ENCODE measurements at regions of chr1 and their contacts with region 1.

Region 1: DNA sequence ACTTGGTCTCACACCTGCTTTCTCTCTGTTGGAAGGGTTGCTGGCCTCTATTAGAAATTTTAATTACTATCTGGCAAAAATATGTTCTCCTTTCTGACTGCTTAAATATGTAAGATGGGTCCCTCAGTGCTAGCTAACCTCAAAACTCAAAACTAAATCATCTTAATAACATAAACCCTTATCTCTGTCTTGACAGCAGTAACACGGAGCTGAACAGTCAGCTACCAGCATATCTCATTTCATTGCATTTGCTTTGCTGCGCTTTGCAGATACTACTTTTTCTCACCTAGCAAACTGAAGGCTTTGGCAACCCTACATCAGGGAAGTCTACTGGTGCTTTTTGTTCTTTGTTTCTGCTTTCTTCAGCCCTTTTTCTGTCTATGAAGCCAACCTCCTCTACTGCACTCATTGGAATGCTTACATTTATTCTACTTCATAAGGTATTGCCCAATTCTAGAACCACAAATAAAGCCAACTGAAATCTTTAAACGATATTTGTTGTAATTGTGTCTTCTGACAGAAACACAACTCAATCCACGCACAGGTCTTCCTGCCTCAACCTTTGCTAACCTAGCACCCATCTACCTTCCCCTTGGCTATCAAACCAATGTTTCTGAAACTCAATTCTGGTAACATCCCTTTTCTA is 95.6 kb downstream of the RERE start:
- DNase-seq: no peak
- H3K4me3 Mint-ChIP-seq: no peak overlapping the region
- H3K27ac Mint-ChIP-seq: no peak overlapping the region
- H3K4me1 Mint-ChIP-seq: peaks cover 47% of the 10 kb centered on the region
- H3K27me3 Mint-ChIP-seq: no peaks in the 10 kb centered on the region

Region 2: GRCh38 chr1:8259498-8260290 is 462.1 kb before region 1 on chr1:
- intact Hi-C with region 1: no loop called
- DNase-seq: no peak
- H3K4me3 Mint-ChIP-seq: no peak overlapping the region
- H3K27ac Mint-ChIP-seq: no peak overlapping the region
- H3K4me1 Mint-ChIP-seq: no peaks in the 10 kb centered on the region
- H3K27me3 Mint-ChIP-seq: peaks cover 9% of the 10 kb centered on the region

Region 3: DNA sequence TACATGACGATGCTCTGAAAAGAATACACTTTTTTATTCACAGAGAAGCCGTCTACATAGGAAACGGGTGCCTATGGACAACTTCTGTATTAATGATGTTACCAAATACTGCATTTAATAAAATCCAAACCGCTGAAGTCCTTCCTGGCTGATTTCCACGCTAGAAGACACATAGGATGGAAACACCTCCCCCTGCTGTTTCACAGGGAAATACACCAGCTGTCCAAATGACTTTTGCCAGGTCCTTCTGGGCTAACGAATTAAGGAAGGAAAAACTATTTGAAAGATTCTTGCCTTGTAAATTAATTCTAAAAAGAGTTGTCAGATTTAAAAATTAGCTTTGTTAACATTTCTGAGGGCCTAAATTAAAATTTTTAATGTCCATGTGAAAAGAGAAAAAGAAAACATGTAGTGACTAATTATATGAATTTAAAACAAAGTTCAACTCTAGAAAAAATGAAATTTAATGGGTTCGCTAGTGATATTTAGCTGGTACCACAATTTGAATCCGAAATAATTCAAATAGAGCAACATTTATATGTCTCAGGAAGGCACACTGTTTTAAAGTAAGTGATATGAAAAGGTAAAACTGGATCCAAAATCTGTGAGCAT is 50.4 kb before region 1 on chr1:
- intact Hi-C with region 1: loop called (anchors 5 kb)
- DNase-seq: no peak
- H3K4me3 Mint-ChIP-seq: no peak overlapping the region
- H3K27ac Mint-ChIP-seq: peak overlapping the region; percentile 19
- H3K4me1 Mint-ChIP-seq: peaks cover 71% of the 10 kb centered on the region
- H3K27me3 Mint-ChIP-seq: no peaks in the 10 kb centered on the region

Region 4: DNA sequence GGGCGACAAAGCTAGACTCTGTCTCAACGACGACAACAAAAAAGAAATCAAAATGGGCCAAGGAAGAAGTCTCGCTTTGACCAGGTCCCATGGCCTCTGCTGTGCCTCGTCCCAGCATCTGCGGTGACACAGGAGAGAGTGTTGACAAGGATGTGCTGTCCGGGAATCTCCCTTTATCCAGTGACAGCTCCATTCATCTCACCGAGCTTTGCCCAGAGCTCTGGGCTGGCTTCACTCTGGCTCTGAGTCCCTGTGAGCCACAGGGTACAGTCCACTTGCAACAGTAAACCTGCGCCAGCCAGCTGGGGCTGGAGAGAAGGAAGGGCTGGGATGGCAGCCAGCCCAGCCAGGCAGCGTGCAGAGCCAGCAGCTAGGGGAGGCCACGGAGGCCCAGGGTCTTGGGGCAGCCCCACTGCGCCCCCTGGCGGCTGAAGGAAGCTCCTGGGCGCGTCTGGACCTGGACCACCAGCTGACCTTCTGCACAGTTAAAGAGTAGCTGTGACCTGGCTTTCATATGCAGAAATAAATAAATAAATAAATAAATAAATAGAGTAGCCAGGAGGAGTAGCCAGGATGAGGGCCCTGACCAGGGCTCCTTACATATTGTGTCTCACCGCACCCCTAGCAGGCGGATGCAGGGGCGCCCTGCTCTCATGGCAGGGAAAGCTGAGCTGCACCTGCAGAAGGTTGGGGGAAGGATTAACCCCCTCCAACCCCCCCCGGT is 127.0 kb after region 1 on chr1:
- intact Hi-C with region 1: loop called (anchors 5 kb)
- DNase-seq: peak; percentile 56
- H3K4me3 Mint-ChIP-seq: no peak overlapping the region
- H3K27ac Mint-ChIP-seq: no peak overlapping the region
- H3K4me1 Mint-ChIP-seq: no peaks in the 10 kb centered on the region
- H3K27me3 Mint-ChIP-seq: no peaks in the 10 kb centered on the region